Vagina (tissue), 2 donors: ENCODE measurements at regions of chr16 and their contacts with region 1.

Region 1: GRCh38 chr16:19071811-19072777 is 4.7 kb downstream of the COQ7 start:
- DNase-seq: no peak
- H3K4me3 ChIP-seq: no peak overlapping the region
- H3K27ac ChIP-seq: no peak overlapping the region
- H3K4me1 ChIP-seq: peaks cover 16% of the 10 kb centered on the region
- H3K27me3 ChIP-seq: no peaks in the 10 kb centered on the region
- CTCF ChIP-seq: peak; percentile 23 to 37 (median 23)
- POLR2A ChIP-seq: no peak

Region 2: DNA sequence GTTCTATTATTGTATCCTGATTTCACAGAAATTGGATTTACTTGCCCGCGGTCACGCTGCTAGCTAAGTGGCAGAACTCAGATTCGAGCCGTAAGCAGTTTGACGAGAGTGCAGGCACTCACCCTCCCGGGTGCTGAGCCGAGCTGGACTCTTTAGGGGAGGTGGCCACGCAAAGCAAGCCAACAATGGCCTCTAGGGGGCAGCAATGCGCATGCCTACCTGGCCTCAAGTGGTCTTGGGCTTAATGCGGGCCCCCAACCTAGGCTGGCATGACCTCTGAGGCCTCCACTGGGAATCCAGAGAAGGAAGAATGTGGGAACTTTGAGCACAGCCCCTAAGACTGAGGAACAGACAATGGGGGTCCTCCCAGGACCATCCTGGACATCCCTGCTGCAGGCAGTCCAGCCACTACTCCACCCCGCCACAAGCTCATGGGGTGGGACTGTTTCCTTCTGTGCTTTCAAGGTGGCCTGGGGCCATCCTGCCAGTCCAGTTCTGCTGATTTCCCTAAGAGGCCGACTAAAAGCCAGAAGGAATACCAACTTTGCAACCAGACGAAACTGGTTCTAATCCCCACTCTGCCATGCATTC is 1877.8 kb before region 1 on chr16:
- intact Hi-C with region 1: no loop called
- DNase-seq: no peak
- H3K4me3 ChIP-seq: no peak overlapping the region
- H3K27ac ChIP-seq: no peak overlapping the region
- H3K4me1 ChIP-seq: no peaks in the 10 kb centered on the region
- H3K27me3 ChIP-seq: no peaks in the 10 kb centered on the region
- CTCF ChIP-seq: peak; percentile 15 to 46 (median 41)
- POLR2A ChIP-seq: no peak

Region 3: GRCh38 chr16:18983565-18984424 is 88.3 kb before region 1 on chr16 and contains the start of gene TMC7:
- intact Hi-C with region 1: loop called (anchors 10 kb)
- DNase-seq: no peak
- H3K4me3 ChIP-seq: peak within 1 kb of the TSS; percentile 52 to 63
- H3K27ac ChIP-seq: peak within 1 kb of the TSS; percentile 49
- H3K4me1 ChIP-seq: no peaks in the 10 kb centered on the region
- H3K27me3 ChIP-seq: no peaks in the 10 kb centered on the region
- CTCF ChIP-seq: peak; percentile 43 to 71 (median 63)
- POLR2A ChIP-seq: no peak
- total RNA-seq, gene TMC7: 1.7 TPM